SK-N-SH (cell line): ENCODE measurements at regions of chr3 and their contacts with region 1.

Region 1: DNA sequence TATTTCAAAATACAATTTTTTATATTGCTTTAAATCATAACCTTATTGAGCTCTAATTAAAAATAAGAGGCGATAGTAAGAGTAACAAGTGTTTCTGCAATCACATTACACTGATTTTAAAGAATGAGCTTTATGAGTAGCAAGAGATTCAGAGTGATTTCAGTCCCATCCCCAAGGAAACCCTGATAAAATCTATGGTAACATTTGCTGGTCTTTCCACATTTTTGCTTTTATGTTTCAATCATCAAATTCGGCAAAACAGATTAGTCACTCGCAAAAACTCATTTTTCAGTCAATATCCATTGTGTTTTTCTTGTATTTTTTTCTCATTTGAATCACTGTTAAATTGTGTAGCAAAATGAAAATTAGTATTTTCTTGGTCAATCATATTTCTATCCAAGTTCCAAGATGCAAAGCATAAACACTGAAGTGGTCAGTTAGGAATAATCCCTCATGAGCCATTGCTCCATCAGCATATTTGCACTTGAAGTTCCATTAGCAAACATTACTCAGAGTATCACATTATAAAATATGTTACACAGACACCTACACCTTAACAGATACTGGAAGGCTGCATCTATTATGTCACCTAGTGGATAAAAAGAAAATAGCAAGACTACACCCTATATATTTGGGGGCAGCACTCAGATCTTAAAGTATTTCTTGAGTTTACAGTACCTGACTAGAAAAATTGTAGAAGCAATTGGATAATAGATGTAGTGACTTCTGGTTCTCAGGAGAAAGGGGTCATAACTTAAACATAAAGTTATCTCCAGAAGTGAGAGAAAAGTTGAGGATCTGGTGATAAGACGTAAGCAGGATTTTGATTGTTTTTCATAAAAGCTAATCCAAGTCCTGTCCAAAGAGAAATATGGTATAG is 422.5 kb downstream of the GBE1 start:
- DNase-seq: peak; percentile 42
- H3K4me3 ChIP-seq: no peak overlapping the region
- H3K27ac ChIP-seq: no peak overlapping the region
- H3K4me1 ChIP-seq: no peaks in the 10 kb centered on the region; a peak in 1 of 4 replicates
- H3K27me3 ChIP-seq: no peaks in the 10 kb centered on the region
- CTCF ChIP-seq: peak; percentile 76
- EP300 ChIP-seq: no peak
- RAD21 ChIP-seq: peak; percentile 74

Region 2: DNA sequence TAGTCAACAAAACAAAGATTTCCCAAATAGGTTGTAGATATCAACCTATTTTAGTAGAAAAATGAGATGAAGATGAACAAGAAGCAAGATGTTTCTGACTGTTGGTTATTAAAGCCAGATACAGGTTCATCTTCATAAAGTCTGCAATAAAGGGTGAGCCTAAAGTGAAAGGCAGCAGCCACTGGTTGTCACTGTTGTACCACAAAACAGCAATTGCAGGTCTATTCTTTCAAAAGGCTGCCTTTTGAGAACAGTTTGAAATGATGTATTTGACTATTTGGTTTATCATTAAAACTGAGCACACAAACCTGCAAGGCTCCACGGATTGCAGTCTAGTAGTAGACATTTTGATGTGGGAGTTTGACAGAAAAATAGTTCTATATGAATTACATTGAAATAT is 120.9 kb before region 1 on chr3:
- CTCF ChIA-PET with region 1: interaction called, 14 read pairs
- POLR2A ChIA-PET with region 1: no interaction called
- DNase-seq: peak; percentile 40
- H3K4me3 ChIP-seq: no peak overlapping the region
- H3K27ac ChIP-seq: no peak overlapping the region
- H3K4me1 ChIP-seq: peaks cover 0 to 14% of the 10 kb centered on the region in 2 experiments; a peak in 3 of 4 replicates
- H3K27me3 ChIP-seq: no peaks in the 10 kb centered on the region
- CTCF ChIP-seq: peak; percentile 88
- EP300 ChIP-seq: no peak
- RAD21 ChIP-seq: peak; percentile 97

Region 3: DNA sequence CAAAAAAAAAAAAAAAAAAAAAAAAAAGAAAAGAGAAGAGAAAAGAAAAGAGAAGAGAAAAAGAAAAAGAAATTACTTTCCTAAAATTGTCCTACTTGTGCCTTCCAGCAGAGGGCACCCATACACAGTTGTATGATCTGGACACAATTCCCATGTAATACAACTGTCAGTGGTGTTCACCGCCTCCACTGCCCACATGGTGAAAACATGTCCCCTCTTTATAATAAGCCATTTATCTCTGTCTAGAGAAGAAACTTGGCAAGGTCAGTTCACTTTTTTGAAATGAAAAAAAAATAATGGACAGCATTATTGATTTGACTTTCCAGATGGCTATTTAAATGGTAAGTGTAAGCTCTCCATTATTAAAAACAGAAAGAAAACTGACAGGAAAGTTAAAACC is 36.9 kb before region 1 on chr3:
- CTCF ChIA-PET with region 1: interaction called, 52 read pairs
- POLR2A ChIA-PET with region 1: no interaction called
- DNase-seq: peak; percentile 77
- H3K4me3 ChIP-seq: no peak overlapping the region; a peak in 1 of 4 replicates
- H3K27ac ChIP-seq: peak overlapping the region in 1 of 2 experiments; percentile 82; a peak in 1 of 4 replicates
- H3K4me1 ChIP-seq: peaks cover 0 to 7% of the 10 kb centered on the region in 2 experiments; a peak in 2 of 4 replicates
- H3K27me3 ChIP-seq: no peaks in the 10 kb centered on the region
- CTCF ChIP-seq: peak; percentile 83
- EP300 ChIP-seq: peak in 1 of 2 experiments; percentile 97; a peak in 2 of 4 replicates
- RAD21 ChIP-seq: peak; percentile 87

Region 4: DNA sequence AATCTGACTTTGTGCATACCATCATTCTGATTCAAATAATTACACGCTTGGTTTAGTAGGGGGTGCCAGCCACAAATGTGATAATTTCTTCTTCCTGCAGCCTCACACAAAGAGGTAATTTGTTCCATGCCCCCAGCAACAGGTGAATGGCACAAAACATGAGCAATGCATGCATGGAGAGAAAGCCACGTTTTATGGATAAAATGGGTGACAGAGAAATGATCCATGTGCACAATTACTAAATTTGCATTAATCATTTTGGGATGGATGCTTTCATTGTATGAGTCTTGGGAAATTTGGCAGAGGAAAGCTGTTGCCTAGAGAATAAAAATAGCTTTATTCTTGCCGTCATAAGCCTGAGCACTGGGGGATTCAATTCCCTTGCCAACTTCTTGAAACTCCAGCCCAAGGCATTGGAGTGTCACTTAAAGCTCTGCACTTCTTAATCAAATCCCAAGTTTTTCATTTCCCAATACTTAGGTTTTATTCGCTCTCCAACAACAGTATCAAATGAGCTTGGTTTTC is 11.0 kb after region 1 on chr3:
- CTCF ChIA-PET with region 1: interaction called, 28 read pairs
- POLR2A ChIA-PET with region 1: no interaction called
- DNase-seq: no peak
- H3K4me3 ChIP-seq: no peak overlapping the region
- H3K27ac ChIP-seq: no peak overlapping the region
- H3K4me1 ChIP-seq: no peaks in the 10 kb centered on the region; a peak in 1 of 4 replicates
- H3K27me3 ChIP-seq: no peaks in the 10 kb centered on the region
- CTCF ChIP-seq: no peak
- EP300 ChIP-seq: no peak
- RAD21 ChIP-seq: no peak